AG04449 (cell line): ENCODE measurements at regions of chr12 and their contacts with region 1.

Region 1: GRCh38 chr12:119885549-119885948 is 8.4 kb upstream of the CIT start:
- DNase-seq: no peak
- H3K4me3 ChIP-seq: no peak overlapping the region
- CTCF ChIP-seq: no peak

Region 2: GRCh38 chr12:119762619-119763018 is 122.9 kb before region 1 on chr12:
- CTCF ChIA-PET with region 1: no interaction called
- POLR2A ChIA-PET with region 1: no interaction called
- DNase-seq: no peak
- H3K4me3 ChIP-seq: no peak overlapping the region
- CTCF ChIP-seq: no peak

Region 3: DNA sequence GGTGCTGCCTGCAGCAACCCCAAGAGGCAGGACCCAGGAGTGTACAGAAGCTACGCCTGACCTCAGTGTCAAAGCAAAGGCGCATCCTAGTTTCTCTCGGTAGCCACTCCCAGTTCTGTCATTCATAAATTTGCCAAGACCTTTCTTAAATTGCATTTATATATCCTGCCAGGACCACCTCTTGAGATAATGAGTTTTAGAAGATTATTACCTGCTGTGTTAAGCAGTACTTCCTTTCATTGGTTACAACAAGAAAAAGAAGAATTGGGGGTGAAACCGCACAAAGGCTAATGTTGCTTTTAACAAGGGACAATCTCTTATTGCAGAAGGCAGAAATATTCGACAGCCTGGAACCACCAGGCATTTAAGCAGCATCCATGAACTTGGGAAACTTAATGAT is 66.2 kb before region 1 on chr12:
- CTCF ChIA-PET with region 1: no interaction called
- POLR2A ChIA-PET with region 1: no interaction called
- DNase-seq: no peak
- H3K4me3 ChIP-seq: no peak overlapping the region
- CTCF ChIP-seq: no peak

Region 4: DNA sequence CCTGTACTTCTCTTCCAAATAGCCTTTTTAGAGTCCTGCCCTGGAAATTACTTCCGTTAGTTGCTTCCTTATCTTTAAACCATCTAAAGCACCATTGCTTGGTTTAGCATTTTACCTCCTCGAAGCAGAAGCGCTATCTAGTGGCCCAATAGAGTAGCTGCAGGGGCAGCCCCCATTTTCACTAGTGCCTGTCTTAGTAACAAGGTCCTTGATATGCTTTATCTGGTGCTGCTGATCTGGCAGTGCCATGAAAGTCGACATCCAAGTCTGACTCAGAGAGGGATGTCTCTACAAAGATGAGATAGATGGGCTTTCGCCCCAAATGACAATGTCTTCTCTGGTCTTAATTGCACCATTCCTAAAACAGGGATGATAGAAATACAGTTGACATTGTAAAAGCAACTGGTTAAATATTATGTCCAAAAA is 16.5 kb after region 1 on chr12:
- CTCF ChIA-PET with region 1: interaction called, 10 read pairs
- POLR2A ChIA-PET with region 1: no interaction called
- DNase-seq: peak; percentile 33
- H3K4me3 ChIP-seq: no peak overlapping the region
- CTCF ChIP-seq: peak; percentile 85

Region 5: DNA sequence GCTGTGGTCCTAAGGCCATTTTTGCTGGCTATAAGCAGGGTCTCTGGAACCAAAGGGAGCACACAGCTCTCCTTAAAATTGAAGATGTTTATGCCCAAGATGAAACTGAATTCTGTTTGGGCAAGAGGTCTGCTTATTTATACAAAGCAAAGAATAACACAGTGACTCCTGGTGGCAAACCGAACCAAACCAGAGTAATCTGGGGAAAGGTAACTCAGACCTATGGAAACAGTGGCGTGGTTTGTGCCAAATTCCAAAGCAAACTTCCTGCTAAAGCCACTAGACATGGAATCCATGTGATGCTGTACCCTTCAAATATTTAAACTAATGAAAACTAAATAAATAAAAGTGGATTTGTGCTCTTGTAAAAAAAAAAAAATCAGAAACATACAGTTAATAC is 73.9 kb after region 1 on chr12:
- CTCF ChIA-PET with region 1: no interaction called
- POLR2A ChIA-PET with region 1: no interaction called
- DNase-seq: no peak
- H3K4me3 ChIP-seq: no peak overlapping the region
- CTCF ChIP-seq: no peak